Psoas muscle (tissue), 8 donors: ENCODE measurements at regions of chr11 and their contacts with region 1.

Region 1: DNA sequence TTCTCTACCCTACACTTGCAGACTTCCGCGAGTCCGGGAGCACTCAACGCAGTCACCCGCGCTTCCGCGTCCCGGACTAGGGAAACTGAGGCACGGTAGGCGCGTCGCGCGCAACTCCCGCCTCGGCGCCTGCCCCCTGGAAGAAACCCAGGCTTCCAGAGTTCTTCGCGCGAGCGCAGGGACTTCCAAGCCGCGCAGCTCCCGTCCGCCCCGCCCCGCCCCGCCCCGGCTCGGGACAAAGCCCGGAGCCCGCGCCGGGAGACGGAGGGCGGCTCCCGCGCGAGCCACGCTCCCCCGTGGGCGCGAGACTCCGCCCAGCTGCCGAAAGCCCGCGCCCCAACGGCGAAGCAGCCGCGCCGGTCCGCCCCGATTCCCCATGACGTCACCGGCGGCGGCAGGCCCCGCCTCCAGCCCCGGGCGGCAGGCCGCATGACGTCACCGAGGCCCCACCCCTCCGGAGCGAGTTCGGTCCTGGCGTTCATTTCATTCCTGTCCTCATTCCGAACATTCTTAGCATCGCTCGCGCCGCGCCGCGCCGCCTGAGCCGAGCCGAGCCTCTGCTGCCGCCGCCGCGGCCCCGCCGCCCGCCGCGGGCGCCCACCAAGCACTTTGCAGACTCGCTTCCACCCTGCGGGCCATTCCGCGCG is at the start of gene TEAD1:
- DNase-seq: peak; percentile 96 to 98
- ATAC-seq: peak; percentile 90 to 93 (median 91)
- H3K4me3 ChIP-seq: peak within 1 kb of the TSS; percentile 83
- H3K27ac ChIP-seq: peak within 1 kb of the TSS; percentile 96
- H3K4me1 ChIP-seq: peaks cover 25% of the 10 kb centered on the region
- H3K27me3 ChIP-seq: no peaks in the 10 kb centered on the region
- CTCF ChIP-seq: no peak
- total RNA-seq, gene TEAD1: 111 to 178 (median 141) TPM

Region 2: DNA sequence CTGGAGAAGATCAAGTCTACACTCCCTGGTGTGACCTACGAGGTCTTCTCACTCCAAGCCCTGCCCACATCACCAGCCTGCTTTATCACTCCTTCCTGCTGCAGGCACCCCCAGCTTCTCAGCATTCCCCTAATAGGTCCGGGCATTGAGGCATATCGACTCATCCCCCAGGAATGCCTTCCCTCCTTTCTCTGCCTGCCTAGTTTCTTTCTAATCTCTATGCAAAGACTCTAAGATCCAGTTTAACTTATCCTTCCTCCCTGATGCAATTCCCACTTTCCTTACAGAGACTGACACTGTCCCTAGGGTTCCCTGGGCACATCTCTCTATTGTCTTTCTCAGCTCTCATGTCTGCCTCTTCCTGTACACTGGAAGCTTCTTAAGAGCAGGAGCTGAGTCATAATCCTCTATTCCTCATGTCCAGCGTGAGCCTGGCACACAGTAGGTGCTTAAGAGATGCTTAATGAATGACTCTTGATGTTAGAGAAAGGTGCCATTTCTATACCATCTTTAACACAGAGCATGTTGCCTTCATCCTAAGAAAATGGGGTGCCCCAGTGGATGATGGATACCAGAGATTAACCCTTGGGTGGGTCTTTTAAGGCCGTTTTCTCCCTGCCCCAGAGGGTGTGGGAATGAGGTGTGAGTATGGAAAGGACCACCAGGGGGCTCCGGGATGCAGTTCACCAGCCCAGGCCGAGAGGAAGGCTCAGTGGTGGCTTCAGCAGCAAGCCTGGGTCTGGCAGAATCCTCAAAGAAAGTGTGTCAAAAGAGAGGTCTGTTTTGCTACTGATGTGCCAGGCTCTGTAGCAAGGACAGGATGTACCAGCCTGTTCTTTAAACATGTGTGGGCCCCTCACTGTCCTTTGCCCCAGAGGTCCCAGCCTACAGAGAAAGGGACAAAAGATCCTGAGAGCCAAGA is 262.0 kb before region 1 on chr11:
- intact Hi-C with region 1: loop called in 1 of 2 experiments (anchors 10 kb)
- DNase-seq: peak; percentile 68 to 79
- ATAC-seq: peak; percentile 90 to 92 (median 91)
- H3K4me3 ChIP-seq: no peak overlapping the region
- H3K27ac ChIP-seq: peak overlapping the region; percentile 30
- H3K4me1 ChIP-seq: peaks cover 26% of the 10 kb centered on the region
- H3K27me3 ChIP-seq: no peaks in the 10 kb centered on the region
- CTCF ChIP-seq: peak; percentile 66

Region 3: DNA sequence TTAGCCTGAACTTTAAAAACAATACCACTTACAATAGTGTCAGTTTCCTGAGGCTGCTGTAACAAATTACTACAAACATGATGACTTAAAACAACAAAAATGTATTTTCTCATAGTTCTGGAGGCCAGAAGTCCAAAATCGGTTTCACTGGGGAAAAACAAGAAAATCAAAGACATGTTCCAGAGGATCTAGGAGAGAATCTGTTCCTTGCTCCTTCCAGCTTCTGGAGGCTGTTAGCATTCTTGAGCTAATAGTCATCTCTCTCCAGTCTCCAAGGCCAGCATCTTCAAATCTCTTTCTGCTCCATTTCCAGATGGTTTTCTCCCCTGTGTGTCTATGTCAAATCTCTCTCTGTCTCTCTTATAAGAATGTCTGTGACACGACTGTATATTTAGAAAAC is 67.5 kb before region 1 on chr11:
- intact Hi-C with region 1: no loop called
- DNase-seq: no peak
- ATAC-seq: peak in 1 of 4 donors; percentile 42
- H3K4me3 ChIP-seq: no peak overlapping the region
- H3K27ac ChIP-seq: no peak overlapping the region
- H3K4me1 ChIP-seq: no peaks in the 10 kb centered on the region
- H3K27me3 ChIP-seq: no peaks in the 10 kb centered on the region
- CTCF ChIP-seq: no peak

Region 4: GRCh38 chr11:12693479-12694181 is 19.6 kb after region 1 on chr11:
- intact Hi-C with region 1: loop called in 1 of 2 experiments (anchors 2 kb)
- DNase-seq: peak; percentile 32 to 66
- ATAC-seq: peak; percentile 78 to 87 (median 84)
- H3K4me3 ChIP-seq: peak overlapping the region; percentile 55
- H3K27ac ChIP-seq: peak overlapping the region; percentile 95
- H3K4me1 ChIP-seq: peaks cover 85% of the 10 kb centered on the region
- H3K27me3 ChIP-seq: no peaks in the 10 kb centered on the region
- CTCF ChIP-seq: no peak

Region 5: DNA sequence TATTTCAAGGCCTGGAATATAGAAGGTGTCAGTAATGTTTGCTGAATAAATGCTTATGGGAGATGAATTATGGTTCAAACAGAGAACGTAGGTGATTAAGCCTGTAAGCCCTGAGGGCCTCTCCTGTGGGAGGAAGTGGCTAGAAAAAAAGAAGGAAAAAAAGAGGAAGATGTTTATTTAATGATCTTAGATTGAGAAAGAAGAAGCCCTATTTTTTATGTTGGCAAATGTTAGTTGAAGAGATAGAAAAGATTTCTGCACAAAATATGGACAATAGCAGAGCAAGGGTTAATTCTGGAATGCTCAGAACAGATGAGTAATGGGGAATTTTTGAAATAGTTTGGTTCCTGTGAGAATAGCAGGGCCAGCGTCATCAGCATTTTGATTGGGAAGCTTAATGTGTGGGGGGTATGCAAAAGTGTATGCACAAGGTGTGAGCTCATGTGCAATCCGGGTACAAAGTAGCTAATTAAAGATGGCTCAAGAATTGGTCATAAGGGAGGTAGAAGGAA is 95.8 kb after region 1 on chr11:
- intact Hi-C with region 1: loop called in 1 of 2 experiments (anchors 5 kb)
- DNase-seq: no peak
- ATAC-seq: no peak
- H3K4me3 ChIP-seq: no peak overlapping the region
- H3K27ac ChIP-seq: peak overlapping the region; percentile 83
- H3K4me1 ChIP-seq: peaks cover 82% of the 10 kb centered on the region
- H3K27me3 ChIP-seq: no peaks in the 10 kb centered on the region
- CTCF ChIP-seq: no peak

Region 6: GRCh38 chr11:12888525-12889158 is 214.6 kb after region 1 on chr11:
- intact Hi-C with region 1: loop called (anchors 5 kb)
- DNase-seq: peak; percentile 85 to 91
- ATAC-seq: peak; percentile 83 to 87 (median 84)
- H3K4me3 ChIP-seq: no peak overlapping the region
- H3K27ac ChIP-seq: peak overlapping the region; percentile 82
- H3K4me1 ChIP-seq: peaks cover 44% of the 10 kb centered on the region
- H3K27me3 ChIP-seq: no peaks in the 10 kb centered on the region
- CTCF ChIP-seq: peak; percentile 78

Region 7: DNA sequence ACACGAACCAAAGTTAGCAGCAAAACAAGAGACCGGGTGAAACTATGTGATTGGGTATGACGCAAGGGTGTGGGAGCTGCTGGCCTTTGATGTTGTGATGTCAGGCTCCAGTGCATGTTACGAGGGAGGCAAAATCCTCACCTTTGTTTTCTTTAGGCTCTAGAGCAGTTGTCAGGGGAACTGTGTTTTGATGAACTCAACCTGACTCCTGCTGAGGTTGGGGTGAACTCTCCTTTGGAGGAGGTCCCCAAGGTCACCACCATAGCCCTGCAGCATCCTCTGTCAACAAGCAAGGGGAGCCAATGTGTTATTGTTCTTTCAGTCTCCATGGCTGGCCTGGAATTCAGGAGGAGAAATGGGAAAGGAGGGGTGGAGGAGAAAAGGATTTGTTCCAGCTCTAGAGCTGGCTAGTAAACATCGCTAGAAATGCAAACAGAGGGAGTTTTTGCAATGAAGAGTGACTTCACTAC is 368.9 kb after region 1 on chr11:
- intact Hi-C with region 1: no loop called
- DNase-seq: no peak
- ATAC-seq: no peak
- H3K4me3 ChIP-seq: no peak overlapping the region
- H3K27ac ChIP-seq: no peak overlapping the region
- H3K4me1 ChIP-seq: no peaks in the 10 kb centered on the region
- H3K27me3 ChIP-seq: no peaks in the 10 kb centered on the region
- CTCF ChIP-seq: no peak